H1 (cell line): ENCODE measurements at regions of chr6 and their contacts with region 1.

Region 1: DNA sequence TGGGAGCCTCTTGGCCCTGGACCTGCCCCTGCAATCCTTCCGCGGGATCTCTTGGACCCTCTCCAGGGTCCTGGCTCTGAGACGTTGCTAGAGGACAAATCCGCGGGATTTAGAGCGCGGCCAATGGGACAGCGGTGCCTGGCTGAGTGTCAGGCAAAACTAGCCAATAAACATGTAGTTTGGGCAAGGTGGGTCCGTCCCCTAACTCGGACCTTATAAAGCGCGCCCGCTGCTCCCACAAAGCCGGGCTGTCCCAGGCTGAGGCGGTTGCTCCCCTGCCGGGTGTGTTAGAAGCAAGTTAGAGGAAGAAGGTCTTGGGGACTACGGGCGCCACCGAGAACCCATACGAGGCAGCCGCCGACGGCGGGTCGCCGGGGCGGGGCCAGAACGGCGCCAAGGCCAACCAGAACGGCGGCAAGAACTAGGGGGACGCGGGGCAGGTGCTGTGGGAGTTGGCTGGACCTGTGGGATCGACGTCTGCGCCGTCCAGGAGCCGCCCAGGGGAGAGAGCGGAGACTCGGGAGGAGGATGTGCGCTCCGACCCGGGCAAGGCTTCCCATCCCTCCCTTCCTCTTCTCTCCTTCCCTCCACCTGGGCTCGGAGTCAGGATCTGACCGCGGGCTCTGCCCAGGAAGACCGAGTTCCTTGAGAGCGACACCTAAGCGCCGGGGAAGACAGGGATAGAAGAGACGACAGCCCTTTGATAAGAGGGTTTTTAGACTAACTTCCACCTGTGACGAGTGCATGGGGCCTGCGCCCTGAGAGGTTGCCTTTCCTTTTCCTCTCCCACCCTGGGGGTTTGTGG is 6.5 kb upstream of the TMEM14A start:
- DNase-seq: peak; percentile 93
- H3K4me3 ChIP-seq: peak overlapping the region; percentile 66 to 76 (median 74)
- H3K27ac ChIP-seq: no peak overlapping the region
- H3K4me1 ChIP-seq: peaks cover 0 to 10% (median 5%) of the 10 kb centered on the region in 4 experiments; a peak in 3 of 7 replicates
- H3K27me3 ChIP-seq: peaks cover 0 to 10% (median 7%) of the 10 kb centered on the region in 4 experiments; a peak in 5 of 7 replicates
- CTCF ChIP-seq: no peak
- EP300 ChIP-seq: no peak
- POLR2A ChIP-seq: peak; percentile 90 to 95
- RAD21 ChIP-seq: no peak

Region 2: GRCh38 chr6:52399511-52400312 is 264.7 kb before region 1 on chr6:
- CTCF ChIA-PET with region 1: interaction called, 39 read pairs
- POLR2A ChIA-PET with region 1: interaction called, 4 read pairs
- DNase-seq: no peak
- H3K4me3 ChIP-seq: no peak overlapping the region
- H3K27ac ChIP-seq: no peak overlapping the region
- H3K4me1 ChIP-seq: peaks cover 0 to 4% (median 3%) of the 10 kb centered on the region in 4 experiments; a peak in 3 of 7 replicates
- H3K27me3 ChIP-seq: no peaks in the 10 kb centered on the region
- CTCF ChIP-seq: peak; percentile 35 to 87 (median 82)
- EP300 ChIP-seq: no peak
- POLR2A ChIP-seq: no peak
- RAD21 ChIP-seq: peak; percentile 89 to 91

Region 3: DNA sequence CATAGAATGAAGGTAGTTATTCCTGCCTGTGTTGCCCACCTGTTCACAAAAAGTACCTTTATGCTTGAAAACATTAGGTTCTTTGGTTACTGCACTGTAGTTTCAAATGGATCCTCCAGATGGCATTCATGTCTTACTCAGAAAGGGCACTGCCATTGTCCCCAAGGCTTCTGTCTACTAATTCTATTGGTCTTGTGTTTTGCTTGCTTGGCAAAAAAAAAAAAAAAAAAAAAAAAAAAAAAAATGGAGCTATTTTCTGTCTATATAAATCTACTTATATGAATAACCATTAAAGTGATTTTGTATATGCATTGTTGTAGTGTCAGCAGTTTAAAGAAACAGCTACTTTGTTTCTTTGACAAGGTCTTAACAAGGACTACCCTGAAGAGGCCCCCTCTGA is 256.9 kb before region 1 on chr6:
- CTCF ChIA-PET with region 1: interaction called, 39 read pairs
- POLR2A ChIA-PET with region 1: interaction called, 3 read pairs
- DNase-seq: no peak
- H3K4me3 ChIP-seq: no peak overlapping the region
- H3K27ac ChIP-seq: no peak overlapping the region
- H3K4me1 ChIP-seq: no peaks in the 10 kb centered on the region
- H3K27me3 ChIP-seq: no peaks in the 10 kb centered on the region
- CTCF ChIP-seq: peak in 2 of 3 experiments; percentile 52 to 53; a peak in 3 of 4 replicates
- EP300 ChIP-seq: no peak
- POLR2A ChIP-seq: no peak
- RAD21 ChIP-seq: peak; percentile 78